ENCODE measurements at regions of chr4 and their contacts with region 1.

Region 1: GRCh38 chr4:165327211-165328100 is at the start of gene MSMO1:
- DNase-seq: peak; percentile 98 to 99
- ATAC-seq: peak; percentile 93 to 99 (median 95)
- H3K4me3 ChIP-seq: peak within 1 kb of the TSS; percentile 85
- H3K4me3 Mint-ChIP-seq: no peak within 1 kb of the TSS
- H3K27ac ChIP-seq: peak within 1 kb of the TSS; percentile 81
- H3K27ac Mint-ChIP-seq: no peak within 1 kb of the TSS
- H3K4me1 ChIP-seq: peaks cover 12% of the 10 kb centered on the region
- H3K4me1 Mint-ChIP-seq: peaks cover 24 to 35% of the 10 kb centered on the region in 2 donors
- H3K27me3 ChIP-seq: no peaks in the 10 kb centered on the region
- H3K27me3 Mint-ChIP-seq: no peaks in the 10 kb centered on the region
- CTCF ChIP-seq: no peak
- total RNA-seq, gene MSMO1: 22.5 to 27.7 (median 23.9) TPM

Region 2: DNA sequence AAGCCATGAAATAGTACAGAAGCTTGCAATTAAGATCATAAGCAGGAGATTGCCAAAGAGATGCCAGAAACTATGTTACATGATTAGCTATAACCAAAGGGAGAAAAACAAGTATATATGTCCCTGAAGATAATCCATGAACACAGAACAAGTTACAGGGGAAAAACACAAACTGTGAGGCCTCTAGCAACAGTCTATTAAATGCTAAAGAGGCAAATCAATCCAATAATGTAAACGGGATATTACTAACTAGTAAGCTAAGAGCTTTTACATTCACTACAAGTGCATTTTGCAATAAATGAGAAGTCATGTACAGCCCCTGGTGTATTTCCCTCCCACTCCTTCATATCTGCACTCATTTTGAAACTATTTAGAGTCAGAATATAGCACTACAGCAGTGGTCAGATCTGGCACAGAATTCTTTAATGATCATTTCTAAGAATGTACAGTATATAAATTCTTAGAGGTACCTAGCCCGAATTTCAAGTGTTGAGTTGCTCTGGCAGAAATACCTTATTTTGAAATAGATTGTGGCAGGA is 1023.3 kb before region 1 on chr4:
- intact Hi-C with region 1: no loop called
- DNase-seq: no peak
- ATAC-seq: no peak
- H3K4me3 ChIP-seq: no peak overlapping the region
- H3K4me3 Mint-ChIP-seq: no peak overlapping the region
- H3K27ac ChIP-seq: no peak overlapping the region
- H3K27ac Mint-ChIP-seq: no peak overlapping the region
- H3K4me1 ChIP-seq: no peaks in the 10 kb centered on the region
- H3K4me1 Mint-ChIP-seq: no peaks in the 10 kb centered on the region
- H3K27me3 ChIP-seq: no peaks in the 10 kb centered on the region
- H3K27me3 Mint-ChIP-seq: no peaks in the 10 kb centered on the region
- CTCF ChIP-seq: no peak

Region 3: DNA sequence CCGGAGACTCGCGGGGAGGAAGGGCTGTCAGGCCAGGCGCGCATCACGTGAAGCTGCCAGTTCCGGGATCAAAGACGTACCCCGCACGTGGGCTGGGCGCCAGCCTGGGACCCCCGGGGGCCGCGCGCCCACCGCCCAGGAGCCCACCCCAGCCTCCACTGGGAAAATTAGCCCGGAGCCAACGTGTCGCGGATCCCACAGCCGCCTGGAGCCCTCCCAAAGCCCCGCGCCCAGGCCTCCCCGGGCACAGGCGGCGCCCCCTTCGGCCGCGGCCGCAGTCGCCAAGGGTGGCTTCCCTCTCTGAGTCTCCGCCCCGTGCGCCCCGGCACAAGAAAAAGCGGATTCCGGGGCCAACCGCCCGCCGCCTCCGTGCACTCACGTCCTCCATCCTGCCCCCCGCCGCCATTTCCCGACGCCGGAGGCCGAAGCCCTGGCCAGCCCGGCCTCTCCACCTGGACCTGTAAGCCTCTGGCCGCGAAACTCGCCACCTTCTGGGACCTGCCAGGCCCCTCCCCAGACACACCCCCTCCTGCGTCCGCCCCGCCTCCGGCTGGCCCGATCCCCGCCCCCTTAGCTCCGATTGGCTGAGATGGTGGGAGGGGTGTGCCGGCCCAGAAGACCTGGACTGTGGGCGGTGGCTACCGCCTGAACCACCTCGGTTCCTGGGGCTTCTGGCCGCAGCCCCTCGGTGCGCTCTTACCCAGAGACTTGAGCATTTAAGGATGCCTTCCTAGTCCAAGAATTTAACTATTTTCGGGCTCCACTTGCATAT is 214.9 kb before region 1 on chr4 and contains the start of gene TMEM192:
- intact Hi-C with region 1: loop called (anchors 2 kb)
- DNase-seq: peak; percentile 93 to 96
- ATAC-seq: peak; percentile 95 to 99 (median 96)
- H3K4me3 ChIP-seq: peak within 1 kb of the TSS; percentile 79
- H3K4me3 Mint-ChIP-seq: peak within 1 kb of the TSS; percentile 93
- H3K27ac ChIP-seq: peak within 1 kb of the TSS; percentile 83
- H3K27ac Mint-ChIP-seq: peak within 1 kb of the TSS; percentile 88 to 96
- H3K4me1 ChIP-seq: peaks cover 6% of the 10 kb centered on the region
- H3K4me1 Mint-ChIP-seq: peaks cover 18 to 26% of the 10 kb centered on the region in 2 donors
- H3K27me3 ChIP-seq: no peaks in the 10 kb centered on the region
- H3K27me3 Mint-ChIP-seq: peaks cover 9 to 11% of the 10 kb centered on the region in 2 donors
- CTCF ChIP-seq: no peak
- total RNA-seq, gene TMEM192: 9.4 to 11.4 (median 11.0) TPM

Region 4: GRCh38 chr4:165131247-165131832 is 196.1 kb before region 1 on chr4:
- intact Hi-C with region 1: loop called (anchors 1 kb)
- DNase-seq: peak; percentile 61 to 83
- ATAC-seq: peak; percentile 83 to 89 (median 87)
- H3K4me3 ChIP-seq: no peak overlapping the region
- H3K4me3 Mint-ChIP-seq: no peak overlapping the region
- H3K27ac ChIP-seq: no peak overlapping the region
- H3K27ac Mint-ChIP-seq: no peak overlapping the region
- H3K4me1 ChIP-seq: no peaks in the 10 kb centered on the region
- H3K4me1 Mint-ChIP-seq: peaks cover 0 to 6% of the 10 kb centered on the region in 2 donors
- H3K27me3 ChIP-seq: peaks cover 4% of the 10 kb centered on the region
- H3K27me3 Mint-ChIP-seq: peaks cover 23 to 25% of the 10 kb centered on the region in 2 donors
- CTCF ChIP-seq: peak; percentile 84

Region 5: GRCh38 chr4:165207431-165208220 is 119.8 kb before region 1 on chr4 and contains the start of gene KLHL2:
- intact Hi-C with region 1: loop called (anchors 5 kb)
- DNase-seq: peak; percentile 64 to 80
- ATAC-seq: peak; percentile 85 to 92 (median 89)
- H3K4me3 ChIP-seq: peak within 1 kb of the TSS; percentile 55
- H3K4me3 Mint-ChIP-seq: peak within 1 kb of the TSS; percentile 90
- H3K27ac ChIP-seq: peak within 1 kb of the TSS; percentile 52
- H3K27ac Mint-ChIP-seq: peak within 1 kb of the TSS; percentile 77 to 81
- H3K4me1 ChIP-seq: peaks cover 19% of the 10 kb centered on the region
- H3K4me1 Mint-ChIP-seq: peaks cover 44 to 49% of the 10 kb centered on the region in 2 donors
- H3K27me3 ChIP-seq: no peaks in the 10 kb centered on the region
- H3K27me3 Mint-ChIP-seq: no peaks in the 10 kb centered on the region
- CTCF ChIP-seq: no peak
- total RNA-seq, gene KLHL2: 24.2 to 29.2 (median 25.2) TPM

Measured in natural killer cell (primary cell).